AG04449 (cell line): ENCODE measurements at regions of chr6 and their contacts with region 1.

Region 1: GRCh38 chr6:30942338-30943060 is 1.7 kb downstream of the MUCL3 start:
- DNase-seq: peak; percentile 17
- H3K4me3 ChIP-seq: no peak overlapping the region
- CTCF ChIP-seq: peak; percentile 77

Region 2: GRCh38 chr6:30955367-30956042 is 13.0 kb after region 1 on chr6:
- CTCF ChIA-PET with region 1: interaction called, 17 read pairs
- POLR2A ChIA-PET with region 1: no interaction called
- DNase-seq: no peak
- H3K4me3 ChIP-seq: peak overlapping the region; percentile 40
- CTCF ChIP-seq: no peak

Region 3: GRCh38 chr6:31042806-31043205 is 100.3 kb after region 1 on chr6:
- CTCF ChIA-PET with region 1: interaction called, 15 read pairs
- POLR2A ChIA-PET with region 1: no interaction called
- DNase-seq: no peak
- H3K4me3 ChIP-seq: no peak overlapping the region
- CTCF ChIP-seq: peak; percentile 77